HCT116 (cell line): ENCODE measurements at regions of chr6 and their contacts with region 1.

Region 1: DNA sequence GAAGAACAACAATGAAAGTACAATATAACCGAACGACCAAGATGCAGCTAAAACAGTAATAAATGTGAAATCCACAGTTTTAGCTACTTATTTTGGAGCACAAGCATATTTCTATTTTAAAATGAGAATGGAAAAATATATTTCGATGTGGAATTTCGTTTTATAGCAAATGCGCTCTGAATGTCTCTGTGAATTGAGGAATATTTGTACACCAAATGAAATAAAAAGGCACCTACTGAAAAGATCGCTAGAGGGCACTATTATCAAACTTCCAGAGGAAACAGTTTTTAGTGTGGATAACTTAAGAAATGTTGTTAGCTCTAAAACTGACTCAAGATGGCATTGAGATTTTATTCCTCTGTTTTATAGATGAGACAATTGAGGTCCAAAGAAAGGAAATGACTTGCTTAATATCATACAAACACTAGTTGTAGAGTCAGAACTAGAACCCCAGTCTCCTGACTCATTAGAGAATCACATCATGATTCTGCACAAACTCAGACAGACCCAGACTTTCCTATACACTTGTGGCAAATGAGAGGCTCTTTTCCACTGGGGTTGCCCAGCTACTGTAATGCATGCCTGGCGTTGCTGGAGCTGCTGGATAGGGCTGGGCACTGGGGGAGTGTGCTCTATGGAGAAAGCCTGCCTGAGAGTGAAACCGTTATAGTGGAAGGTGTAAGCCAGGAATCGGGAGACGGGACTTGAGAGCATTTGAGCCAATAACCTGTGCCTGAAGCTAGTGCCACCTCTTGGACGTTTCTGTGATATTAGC is 51.9 kb downstream of the GCLC start:
- DNase-seq: peak; percentile 34
- ATAC-seq: peak; percentile 85
- H3K4me3 ChIP-seq: peak overlapping the region; percentile 8 to 32
- H3K27ac ChIP-seq: no peak overlapping the region
- H3K4me1 ChIP-seq: peaks cover 4 to 21% of the 10 kb centered on the region in 2 experiments; a peak in 2 of 4 replicates
- H3K27me3 ChIP-seq: no peaks in the 10 kb centered on the region
- CTCF ChIP-seq: peak; percentile 61 to 92 (median 79)
- POLR2A ChIP-seq: no peak
- RAD21 ChIP-seq: peak; percentile 91

Region 2: DNA sequence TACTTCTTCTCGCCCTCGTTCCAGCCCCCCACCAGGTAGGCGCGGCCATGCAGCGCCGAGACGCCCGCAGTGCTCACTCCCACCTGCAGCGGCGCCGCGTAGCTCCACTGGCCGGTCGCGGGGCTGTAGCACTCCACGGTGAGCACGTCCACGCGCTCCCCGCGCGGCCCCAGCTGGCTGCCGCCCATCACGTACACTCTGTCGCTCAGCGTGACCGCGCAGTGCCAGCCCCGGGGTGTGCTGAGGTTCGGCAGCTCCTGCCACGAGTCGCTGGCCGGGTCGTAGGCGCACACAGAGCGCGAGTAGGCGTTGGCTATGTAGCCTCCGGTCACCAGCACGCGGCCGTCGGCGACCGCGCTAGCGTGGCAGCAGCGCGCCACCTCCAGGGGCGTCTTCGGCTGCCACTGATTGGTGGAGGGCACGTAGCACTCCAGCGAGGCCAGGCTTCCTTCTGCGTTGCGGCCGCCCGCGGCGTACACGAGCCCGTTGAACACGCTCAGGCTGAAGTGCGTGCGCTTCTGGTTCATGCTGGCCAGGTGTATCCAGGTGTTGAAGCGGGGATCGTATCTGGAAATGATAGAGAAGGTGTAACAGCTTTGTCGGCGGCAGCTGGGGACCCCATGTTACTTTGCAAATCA is 158.8 kb after region 1 on chr6:
- CTCF ChIA-PET with region 1: interaction called, 56 read pairs
- POLR2A ChIA-PET with region 1: interaction called, 4 read pairs
- RAD21 ChIA-PET with region 1: interaction called, 3 to 6 read pairs
- intact Hi-C with region 1: loop called (anchors 1 kb)
- DNase-seq: peak; percentile 88
- ATAC-seq: peak; percentile 93
- H3K4me3 ChIP-seq: peak overlapping the region; percentile 50 to 58
- H3K27ac ChIP-seq: peak overlapping the region; percentile 89
- H3K4me1 ChIP-seq: peaks cover 4 to 31% of the 10 kb centered on the region in 2 experiments; a peak in 3 of 4 replicates
- H3K27me3 ChIP-seq: no peaks in the 10 kb centered on the region
- CTCF ChIP-seq: peak in 2 of 3 experiments; percentile 13 to 33; a peak in 2 of 6 replicates
- POLR2A ChIP-seq: peak; percentile 56
- RAD21 ChIP-seq: peak; percentile 48

Region 3: DNA sequence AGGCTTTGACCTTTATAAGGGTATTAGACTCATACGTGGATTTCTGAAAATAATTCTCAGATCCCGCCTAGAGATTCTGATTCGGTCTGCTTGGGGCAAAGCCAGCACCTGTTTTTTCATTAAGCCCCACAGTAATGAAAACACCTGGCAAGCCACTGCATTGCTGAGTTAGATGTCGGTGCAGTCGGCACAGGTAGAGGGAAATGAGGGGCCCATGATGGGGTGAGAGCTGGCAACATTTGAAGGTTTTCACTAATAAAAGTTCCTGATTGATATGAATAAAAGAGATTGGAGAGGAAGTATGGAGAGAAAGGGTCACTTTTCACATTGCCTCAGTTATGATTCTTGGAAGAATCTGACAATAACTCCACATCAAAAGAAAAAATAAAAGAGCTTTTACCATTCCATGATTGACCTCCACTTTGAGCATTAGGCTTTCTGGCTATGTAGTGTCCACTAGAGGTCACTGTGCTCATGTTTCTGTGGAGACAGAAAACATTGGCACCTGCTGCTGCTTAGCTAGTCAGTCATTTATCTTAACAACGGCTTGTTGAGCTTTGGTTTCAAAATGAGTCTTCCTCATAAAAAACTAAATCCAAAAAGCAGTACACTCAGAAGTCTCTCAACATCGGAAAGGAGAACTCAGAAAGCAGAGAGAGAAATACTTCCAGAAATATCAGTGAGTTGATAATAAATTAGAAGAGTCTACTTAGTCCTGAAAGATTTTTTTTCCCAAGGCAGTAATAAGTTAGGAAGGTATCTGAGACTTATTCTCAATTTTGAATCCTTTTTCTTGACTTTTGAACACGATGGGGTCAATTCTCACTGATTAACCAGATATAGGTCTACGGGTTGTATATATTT is 225.8 kb after region 1 on chr6:
- CTCF ChIA-PET with region 1: interaction called, 227 read pairs
- POLR2A ChIA-PET with region 1: no interaction called
- RAD21 ChIA-PET with region 1: interaction called in 1 of 2 experiments, 3 read pairs
- intact Hi-C with region 1: no loop called
- DNase-seq: peak; percentile 65
- ATAC-seq: peak; percentile 90
- H3K4me3 ChIP-seq: no peak overlapping the region
- H3K27ac ChIP-seq: no peak overlapping the region
- H3K4me1 ChIP-seq: peaks cover 0 to 6% of the 10 kb centered on the region in 2 experiments; a peak in 1 of 4 replicates
- H3K27me3 ChIP-seq: no peaks in the 10 kb centered on the region
- CTCF ChIP-seq: peak; percentile 55 to 91 (median 83); a peak in 5 of 6 replicates
- POLR2A ChIP-seq: no peak
- RAD21 ChIP-seq: peak; percentile 69

Region 4: DNA sequence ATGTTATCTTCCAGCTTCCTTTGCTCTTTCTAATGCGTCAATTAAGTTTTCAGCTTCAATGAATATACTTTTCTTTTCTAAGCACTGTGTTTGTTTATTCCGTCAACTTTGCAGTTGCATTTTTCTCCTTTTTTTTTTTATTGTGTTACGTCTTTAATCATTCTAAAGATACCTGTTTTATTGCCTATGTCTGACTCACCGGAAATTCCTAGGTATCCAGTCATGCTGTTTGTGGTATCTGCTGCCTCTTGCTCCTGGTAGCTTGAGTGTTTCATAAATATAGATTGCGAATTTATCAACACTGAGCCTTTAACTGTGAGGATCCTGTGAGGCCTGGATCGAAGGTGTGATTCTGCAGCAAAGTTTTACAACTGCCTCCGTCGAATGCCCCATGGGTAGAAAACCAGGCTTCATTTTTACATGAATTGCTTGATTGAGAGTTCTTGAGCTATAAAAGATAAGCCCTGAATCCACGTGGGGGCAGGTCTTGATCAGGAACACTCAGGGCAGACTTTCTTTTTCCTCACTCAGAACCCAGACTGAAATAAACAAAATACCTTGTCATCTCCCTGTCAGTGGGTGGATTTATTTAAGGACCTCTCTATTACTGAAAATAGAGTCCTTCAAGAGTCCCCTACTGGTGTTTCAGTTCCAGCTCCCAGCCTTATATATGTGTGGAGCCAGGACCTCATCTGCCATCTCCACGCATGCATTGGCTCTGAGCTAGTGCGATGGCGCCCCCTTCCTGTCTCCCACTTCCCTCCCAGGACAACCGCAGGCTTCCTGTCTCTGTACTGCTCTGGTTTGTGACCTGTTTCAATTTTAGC is 241.6 kb after region 1 on chr6:
- CTCF ChIA-PET with region 1: interaction called, 227 read pairs
- POLR2A ChIA-PET with region 1: interaction called, 5 read pairs
- RAD21 ChIA-PET with region 1: no interaction called
- intact Hi-C with region 1: no loop called
- DNase-seq: peak; percentile 92
- ATAC-seq: peak; percentile 96
- H3K4me3 ChIP-seq: peak overlapping the region; percentile 10 to 30; a peak in 3 of 4 replicates
- H3K27ac ChIP-seq: peak overlapping the region; percentile 96
- H3K4me1 ChIP-seq: peaks cover 63 to 68% of the 10 kb centered on the region in 2 experiments
- H3K27me3 ChIP-seq: no peaks in the 10 kb centered on the region
- CTCF ChIP-seq: peak; percentile 76 to 83 (median 78); a peak in 5 of 6 replicates
- POLR2A ChIP-seq: no peak
- RAD21 ChIP-seq: peak; percentile 56